H1 (cell line): ENCODE measurements at regions of chr14 and their contacts with region 1.

Region 1: DNA sequence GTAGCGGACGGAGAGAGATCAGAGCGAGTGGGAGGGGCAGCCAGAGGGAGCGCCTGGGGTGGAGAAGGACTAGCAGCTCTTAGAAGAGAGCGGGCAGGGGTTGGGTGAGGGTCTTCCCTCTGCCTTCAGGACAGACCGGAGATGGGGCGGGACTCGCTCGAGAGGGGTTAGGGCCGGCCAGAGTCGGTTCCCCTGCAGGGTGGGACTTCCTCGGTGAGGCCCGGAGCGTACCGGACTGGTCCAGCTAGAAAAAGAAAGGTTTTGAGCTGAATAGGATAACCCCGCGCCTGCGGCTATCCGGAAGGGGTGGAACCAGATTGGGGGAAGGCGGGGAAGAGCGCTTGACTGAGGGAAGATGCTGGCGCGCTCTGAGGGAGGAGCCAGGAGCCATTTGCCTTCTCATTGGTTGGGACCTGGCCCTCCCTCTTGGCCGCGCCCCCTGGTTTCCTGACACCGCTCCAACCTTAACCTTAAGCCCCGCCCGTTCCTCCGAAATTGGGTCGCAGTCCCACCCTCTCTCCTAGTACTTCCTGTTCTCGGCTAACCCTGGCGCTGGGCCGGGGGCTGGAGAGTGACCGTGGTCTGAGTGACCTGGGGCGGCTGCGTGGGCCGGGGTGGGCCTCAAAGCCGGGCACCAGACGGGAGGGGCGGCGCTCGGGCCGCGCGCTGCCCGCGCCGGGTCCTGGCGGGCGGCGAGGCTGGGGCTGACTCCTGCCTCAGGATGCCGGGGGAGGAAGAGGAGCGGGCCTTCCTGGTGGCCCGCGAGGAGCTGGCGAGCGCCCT is at the start of gene RNF31:
- DNase-seq: peak; percentile 93 to 96
- H3K4me3 ChIP-seq: peak within 1 kb of the TSS; percentile 92 to 98 (median 96)
- H3K27ac ChIP-seq: peak within 1 kb of the TSS; percentile 45; the same call in 1 of the 2 replicates
- H3K4me1 ChIP-seq: peaks cover 0 to 10% (median 7%) of the 10 kb centered on the region in 4 experiments; a peak in 5 of 7 replicates
- H3K27me3 ChIP-seq: no peaks in the 10 kb centered on the region
- CTCF ChIP-seq: no peak
- EP300 ChIP-seq: no peak
- POLR2A ChIP-seq: peak in 1 of 2 experiments; percentile 55; a peak in 1 of 3 replicates
- RAD21 ChIP-seq: no peak
- total RNA-seq, gene RNF31: 57.8 and 72.0 TPM in 2 replicates

Region 2: GRCh38 chr14:24135834-24136542 is 11.2 kb before region 1 on chr14 and contains the start of gene PSME1:
- CTCF ChIA-PET with region 1: interaction called, 7 read pairs
- POLR2A ChIA-PET with region 1: interaction called, 39 read pairs
- DNase-seq: peak in 1 of 2 experiments; percentile 94
- H3K4me3 ChIP-seq: peak within 1 kb of the TSS; percentile 79 to 100 (median 84)
- H3K27ac ChIP-seq: peak within 1 kb of the TSS; percentile 14; the same call in 1 of the 2 replicates
- H3K4me1 ChIP-seq: peaks cover 0 to 10% (median 6%) of the 10 kb centered on the region in 4 experiments; a peak in 5 of 7 replicates
- H3K27me3 ChIP-seq: no peaks in the 10 kb centered on the region
- CTCF ChIP-seq: no peak
- EP300 ChIP-seq: no peak
- POLR2A ChIP-seq: peak; percentile 37 to 38; a peak in 1 of 3 replicates
- RAD21 ChIP-seq: no peak
- total RNA-seq, gene PSME1: 85.9 and 91.7 TPM in 2 replicates

Region 3: DNA sequence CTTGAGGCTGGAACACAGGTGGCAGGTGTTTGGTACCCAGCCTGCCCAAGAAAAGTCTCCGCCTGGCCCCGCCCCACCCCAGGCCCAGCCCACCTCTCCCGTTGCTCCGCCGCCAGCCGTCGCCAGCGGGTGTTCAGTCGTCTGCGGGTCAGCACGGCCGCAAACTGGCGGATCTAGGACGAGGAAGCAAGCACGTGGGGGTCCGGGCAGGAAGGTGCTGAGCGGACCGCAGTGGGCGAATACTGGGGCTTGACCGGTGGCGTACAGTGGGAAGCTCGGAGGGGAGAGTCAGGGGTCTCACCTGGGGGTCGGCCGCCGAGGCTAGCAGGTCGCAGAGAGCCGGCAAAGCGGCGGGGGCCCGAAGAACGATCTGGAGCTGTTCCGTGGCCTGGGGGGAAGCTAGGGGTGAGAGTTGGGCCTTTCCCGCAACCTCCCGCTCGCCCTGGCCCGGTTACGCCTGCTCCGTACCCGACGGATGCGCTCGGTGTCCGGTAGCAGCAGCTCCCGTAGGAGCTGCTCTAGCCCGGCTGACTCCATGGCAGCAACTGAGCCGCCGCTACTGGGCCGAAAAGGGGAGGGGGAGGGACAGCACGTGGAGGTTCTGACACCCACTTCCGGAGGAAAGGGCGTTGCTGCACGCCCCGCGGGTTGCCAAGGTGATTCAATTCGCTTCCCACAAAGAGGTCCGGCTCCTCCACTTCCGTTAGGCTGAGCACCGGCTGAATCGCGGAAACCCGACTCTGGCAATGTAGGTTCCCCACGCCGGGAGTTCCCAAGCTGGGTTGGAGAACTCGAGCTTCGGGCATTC is 41.3 kb after region 1 on chr14 and contains the start of gene IPO4:
- CTCF ChIA-PET with region 1: interaction called, 5 read pairs
- POLR2A ChIA-PET with region 1: interaction called, 14 read pairs
- DNase-seq: peak; percentile 93 to 95
- H3K4me3 ChIP-seq: peak within 1 kb of the TSS; percentile 75 to 91 (median 87)
- H3K27ac ChIP-seq: peak within 1 kb of the TSS; percentile 58; the same call in 1 of the 2 replicates
- H3K4me1 ChIP-seq: peaks cover 0 to 7% (median 4%) of the 10 kb centered on the region in 4 experiments; a peak in 6 of 7 replicates
- H3K27me3 ChIP-seq: no peaks in the 10 kb centered on the region
- CTCF ChIP-seq: no peak; a peak in 1 of 4 replicates
- EP300 ChIP-seq: peak in 1 of 2 experiments; percentile 93; a peak in 1 of 3 replicates
- POLR2A ChIP-seq: peak in 1 of 2 experiments; percentile 91; a peak in 2 of 3 replicates
- RAD21 ChIP-seq: peak; percentile 24 to 37; a peak in 2 of 4 replicates
- total RNA-seq, gene IPO4: 108 and 109 TPM in 2 replicates

Region 4: GRCh38 chr14:24249230-24250021 is 102.3 kb after region 1 on chr14:
- CTCF ChIA-PET with region 1: no interaction called
- POLR2A ChIA-PET with region 1: no interaction called
- DNase-seq: no peak
- H3K4me3 ChIP-seq: no peak overlapping the region
- H3K27ac ChIP-seq: no peak overlapping the region
- H3K4me1 ChIP-seq: no peaks in the 10 kb centered on the region
- H3K27me3 ChIP-seq: no peaks in the 10 kb centered on the region
- CTCF ChIP-seq: no peak
- EP300 ChIP-seq: no peak
- POLR2A ChIP-seq: no peak
- RAD21 ChIP-seq: no peak

Region 5: GRCh38 chr14:24279301-24280186 is 132.4 kb after region 1 on chr14:
- CTCF ChIA-PET with region 1: no interaction called
- POLR2A ChIA-PET with region 1: no interaction called
- DNase-seq: no peak
- H3K4me3 ChIP-seq: no peak overlapping the region
- H3K27ac ChIP-seq: no peak overlapping the region
- H3K4me1 ChIP-seq: no peaks in the 10 kb centered on the region
- H3K27me3 ChIP-seq: no peaks in the 10 kb centered on the region
- CTCF ChIP-seq: peak; percentile 27 to 52 (median 51); a peak in 2 of 4 replicates
- EP300 ChIP-seq: no peak
- POLR2A ChIP-seq: no peak
- RAD21 ChIP-seq: peak; percentile 10 to 28; a peak in 2 of 4 replicates